CD8-positive, alpha-beta T cell (primary cell): ENCODE measurements at regions of chr16 and their contacts with region 1.

Region 1: GRCh38 chr16:50756473-50756872 is 14.6 kb downstream of the CYLD start:
- DNase-seq: no peak
- ATAC-seq: no peak
- H3K4me3 ChIP-seq: no peak overlapping the region
- H3K4me3 Mint-ChIP-seq: no peak overlapping the region
- H3K27ac ChIP-seq: no peak overlapping the region
- H3K27ac Mint-ChIP-seq: no peak overlapping the region
- H3K4me1 ChIP-seq: peaks cover 59% of the 10 kb centered on the region
- H3K4me1 Mint-ChIP-seq: peaks cover 78% of the 10 kb centered on the region
- H3K27me3 ChIP-seq: no peaks in the 10 kb centered on the region
- H3K27me3 Mint-ChIP-seq: no peaks in the 10 kb centered on the region
- CTCF ChIP-seq: no peak

Region 2: DNA sequence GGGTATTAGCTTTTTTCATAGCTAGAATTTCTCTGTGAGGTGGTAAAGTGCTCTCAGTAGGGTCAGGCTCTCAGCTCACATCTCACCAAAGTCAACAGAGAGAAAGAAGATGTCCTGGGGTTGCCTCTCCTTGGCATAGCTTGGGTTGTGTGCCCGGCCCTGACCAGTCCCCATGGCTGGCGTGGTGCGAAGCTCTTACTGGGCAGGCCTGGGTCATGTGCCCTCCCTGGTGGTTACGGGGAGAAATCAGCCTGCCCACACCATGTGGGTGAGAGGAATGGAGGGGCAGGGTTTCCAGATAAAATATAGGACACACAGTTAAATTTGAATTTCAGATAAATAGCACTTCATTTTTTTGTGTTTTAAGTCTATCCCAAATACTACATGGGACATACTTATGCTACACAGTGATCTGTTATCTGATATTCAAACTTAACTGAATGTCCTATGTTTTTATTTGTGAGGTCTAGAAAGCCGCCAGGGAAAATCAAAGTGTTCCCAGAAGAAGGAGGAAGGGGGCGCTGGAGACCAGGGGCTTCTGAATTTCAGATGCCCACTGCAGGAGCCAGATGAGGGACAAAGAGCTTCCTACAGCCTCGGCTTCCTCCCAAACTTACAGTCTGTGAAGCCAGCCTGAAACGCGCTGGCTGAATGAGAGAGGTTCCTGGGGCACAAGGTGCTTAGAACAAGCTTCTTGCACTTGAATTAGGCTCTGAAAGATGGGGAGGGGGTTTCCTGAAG is 162.9 kb before region 1 on chr16:
- CTCF ChIA-PET with region 1: no interaction called
- POLR2A ChIA-PET with region 1: no interaction called
- intact Hi-C with region 1: no loop called
- DNase-seq: no peak
- ATAC-seq: no peak
- H3K4me3 ChIP-seq: no peak overlapping the region
- H3K4me3 Mint-ChIP-seq: no peak overlapping the region
- H3K27ac ChIP-seq: no peak overlapping the region
- H3K27ac Mint-ChIP-seq: no peak overlapping the region
- H3K4me1 ChIP-seq: peaks cover 18% of the 10 kb centered on the region
- H3K4me1 Mint-ChIP-seq: peaks cover 23% of the 10 kb centered on the region
- H3K27me3 ChIP-seq: no peaks in the 10 kb centered on the region
- H3K27me3 Mint-ChIP-seq: no peaks in the 10 kb centered on the region
- CTCF ChIP-seq: no peak

Region 3: GRCh38 chr16:50776037-50776436 is 19.6 kb after region 1 on chr16:
- CTCF ChIA-PET with region 1: no interaction called
- POLR2A ChIA-PET with region 1: interaction called, 3 read pairs
- intact Hi-C with region 1: loop called in 1 of 2 experiments (anchors 2 kb)
- DNase-seq: no peak
- ATAC-seq: no peak
- H3K4me3 ChIP-seq: no peak overlapping the region
- H3K4me3 Mint-ChIP-seq: no peak overlapping the region
- H3K27ac ChIP-seq: no peak overlapping the region
- H3K27ac Mint-ChIP-seq: no peak overlapping the region
- H3K4me1 ChIP-seq: peaks cover 14% of the 10 kb centered on the region
- H3K4me1 Mint-ChIP-seq: peaks cover 68% of the 10 kb centered on the region
- H3K27me3 ChIP-seq: no peaks in the 10 kb centered on the region
- H3K27me3 Mint-ChIP-seq: no peaks in the 10 kb centered on the region
- CTCF ChIP-seq: no peak